Psoas muscle (tissue), 8 donors: ENCODE measurements at regions of chr1 and their contacts with region 1.

Region 1: GRCh38 chr1:8671306-8671917 is 146.0 kb downstream of the RERE start:
- DNase-seq: no peak
- ATAC-seq: peak; percentile 63 to 83 (median 74)
- H3K4me3 ChIP-seq: no peak overlapping the region
- H3K27ac ChIP-seq: no peak overlapping the region
- H3K4me1 ChIP-seq: peaks cover 50% of the 10 kb centered on the region
- H3K27me3 ChIP-seq: no peaks in the 10 kb centered on the region
- CTCF ChIP-seq: peak; percentile 83

Region 2: DNA sequence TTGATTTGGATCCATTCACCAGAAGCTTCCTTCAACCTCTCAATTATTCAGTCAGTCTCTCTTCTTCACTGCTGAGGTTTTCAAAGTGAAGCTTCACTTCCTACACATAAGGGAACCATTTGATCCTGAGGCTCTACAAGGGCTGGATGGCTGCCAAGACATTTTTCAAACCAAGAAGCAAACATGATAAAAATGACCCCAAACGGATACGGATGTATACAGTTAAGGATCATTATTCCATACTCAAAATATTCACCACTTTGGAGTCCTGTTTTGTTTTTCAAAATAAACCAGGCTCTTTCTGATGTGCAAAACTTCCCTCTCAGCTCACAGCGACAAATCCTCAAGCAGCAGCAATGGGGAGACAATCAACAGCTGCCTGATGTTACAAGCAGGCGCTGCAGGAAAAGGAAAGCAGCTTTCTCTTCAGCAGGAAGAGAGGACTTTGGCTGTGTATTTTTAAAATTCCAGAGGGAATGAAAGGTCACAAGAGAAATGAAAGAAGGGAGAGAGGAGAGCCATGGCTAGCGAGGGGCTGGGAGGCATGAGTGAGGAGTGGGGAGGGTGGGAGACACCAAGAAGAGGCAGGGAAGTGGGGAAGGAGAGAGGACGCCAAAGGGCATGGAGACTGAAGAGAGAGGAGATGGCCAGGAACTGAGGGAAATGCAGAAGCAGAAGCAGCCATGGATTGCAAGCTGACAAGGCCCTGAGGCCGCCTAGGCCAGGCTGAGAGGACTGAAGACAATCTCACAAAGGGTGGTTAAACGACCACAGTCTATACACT is 208.1 kb before region 1 on chr1:
- intact Hi-C with region 1: loop called in 1 of 2 experiments (anchors 10 kb)
- DNase-seq: no peak
- ATAC-seq: peak; percentile 11 to 39 (median 28)
- H3K4me3 ChIP-seq: peak overlapping the region; percentile 6
- H3K27ac ChIP-seq: peak overlapping the region; percentile 76
- H3K4me1 ChIP-seq: peaks cover 35% of the 10 kb centered on the region
- H3K27me3 ChIP-seq: no peaks in the 10 kb centered on the region
- CTCF ChIP-seq: no peak

Region 3: GRCh38 chr1:8560611-8561544 is 110.5 kb before region 1 on chr1:
- intact Hi-C with region 1: loop called (anchors 1 to 2 kb)
- DNase-seq: no peak
- ATAC-seq: peak; percentile 79 to 88 (median 84)
- H3K4me3 ChIP-seq: no peak overlapping the region
- H3K27ac ChIP-seq: no peak overlapping the region
- H3K4me1 ChIP-seq: peaks cover 5% of the 10 kb centered on the region
- H3K27me3 ChIP-seq: no peaks in the 10 kb centered on the region
- CTCF ChIP-seq: peak; percentile 96

Region 4: DNA sequence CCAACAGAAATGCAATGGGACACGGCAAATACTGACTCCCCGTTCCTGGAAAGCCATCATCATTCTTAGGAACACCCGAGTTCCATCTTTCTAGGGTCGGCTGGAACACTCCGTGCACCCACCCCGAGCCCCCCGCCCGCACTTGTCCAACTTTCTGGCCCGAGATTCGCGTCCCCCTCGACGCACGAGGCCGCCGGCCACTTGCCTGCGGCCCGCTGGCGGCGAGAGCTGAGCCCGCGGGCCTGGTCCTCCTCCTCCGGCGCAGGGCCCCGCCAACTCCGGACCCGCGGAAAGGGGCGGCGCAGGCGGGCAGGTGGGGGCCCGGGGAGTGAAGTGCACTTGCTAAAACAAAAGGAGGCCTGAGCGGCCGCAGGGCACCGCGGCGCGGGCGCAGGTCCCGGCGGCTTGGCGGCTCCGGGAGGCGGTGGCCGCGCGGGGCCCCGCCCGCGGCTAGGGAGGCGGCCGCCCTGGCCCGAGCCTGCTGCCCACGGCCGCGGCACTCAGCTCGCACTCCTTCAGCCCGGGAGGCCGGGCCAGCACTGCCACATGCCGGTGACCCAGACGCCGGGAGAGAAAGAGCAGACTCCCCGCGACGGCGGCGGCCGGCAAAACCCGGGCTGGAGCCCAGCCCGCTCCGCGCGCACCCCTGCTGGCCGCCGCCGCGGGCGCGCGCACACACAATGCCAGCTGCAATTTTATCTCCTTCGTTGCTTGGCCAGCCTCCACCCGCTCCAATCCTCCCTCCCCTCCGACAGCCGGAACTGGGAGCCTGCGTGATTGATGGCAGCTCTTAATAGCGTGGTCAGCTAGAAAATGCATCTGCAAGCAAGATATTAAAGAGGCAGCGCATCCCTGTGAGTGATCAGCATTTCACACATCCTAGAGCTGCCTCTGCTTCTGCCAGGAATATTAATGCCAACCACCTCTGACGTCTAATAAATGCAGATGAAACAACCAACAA is 31.7 kb after region 1 on chr1:
- intact Hi-C with region 1: loop called in 1 of 2 experiments (anchors 5 kb)
- DNase-seq: peak; percentile 92 to 97
- ATAC-seq: peak; percentile 89 to 94 (median 94)
- H3K4me3 ChIP-seq: peak overlapping the region; percentile 76
- H3K27ac ChIP-seq: peak overlapping the region; percentile 85
- H3K4me1 ChIP-seq: peaks cover 55% of the 10 kb centered on the region
- H3K27me3 ChIP-seq: no peaks in the 10 kb centered on the region
- CTCF ChIP-seq: peak; percentile 2